ENCODE measurements at regions of chr14 and their contacts with region 1.

Region 1: DNA sequence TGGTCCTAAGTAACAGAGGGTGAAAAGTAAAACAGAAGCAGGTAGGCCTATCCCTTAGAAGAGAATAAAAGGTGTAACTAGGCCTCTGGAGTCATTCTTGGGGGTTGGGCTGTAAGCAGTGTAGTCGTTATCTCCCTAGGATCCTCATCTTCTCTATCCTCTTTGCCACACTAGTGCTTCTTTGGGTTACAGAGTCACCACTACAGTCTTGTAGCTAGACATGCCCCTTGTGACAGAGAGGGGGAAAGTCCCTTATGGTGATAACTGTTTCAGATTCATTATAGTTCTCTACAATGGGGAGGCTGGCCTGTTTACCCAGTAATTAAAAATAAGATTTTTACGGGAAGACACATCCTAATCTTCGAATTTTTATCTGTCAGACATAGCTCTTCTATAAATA is 16.4 kb upstream of the SRP54 start:
- DNase-seq: peak in 1 of 3 donors; percentile 5
- H3K4me3 ChIP-seq: no peak overlapping the region
- H3K27ac ChIP-seq: no peak overlapping the region
- H3K4me1 ChIP-seq: peaks cover 0 to 4% (median 0%) of the 10 kb centered on the region in 4 experiments
- H3K27me3 ChIP-seq: no peaks in the 10 kb centered on the region

Region 2: DNA sequence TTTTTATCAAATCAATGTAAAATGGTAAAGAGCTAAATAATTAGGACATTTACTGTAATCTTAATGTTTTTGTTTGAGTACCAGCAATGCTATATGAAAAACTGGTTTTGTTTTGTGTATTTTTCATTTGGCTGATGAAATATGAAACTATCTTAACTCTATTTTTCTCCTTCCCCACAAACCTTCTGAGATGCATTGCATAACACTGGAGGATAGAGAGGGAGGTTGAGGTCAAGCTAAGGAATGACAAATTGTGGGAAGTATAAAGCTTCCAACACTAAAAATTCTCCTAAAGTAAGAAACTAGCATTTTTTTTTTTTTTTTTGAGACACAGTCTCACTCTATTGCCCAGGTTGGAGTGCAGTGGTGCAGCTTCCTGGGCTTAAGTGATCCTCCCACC is 15.1 kb before region 1 on chr14:
- CTCF ChIA-PET with region 1: no interaction called
- POLR2A ChIA-PET with region 1: no interaction called
- DNase-seq: no peak
- H3K4me3 ChIP-seq: no peak overlapping the region
- H3K27ac ChIP-seq: no peak overlapping the region
- H3K4me1 ChIP-seq: no peaks in the 10 kb centered on the region
- H3K27me3 ChIP-seq: no peaks in the 10 kb centered on the region

Region 3: GRCh38 chr14:34981743-34982416 is 15.5 kb after region 1 on chr14:
- CTCF ChIA-PET with region 1: interaction called, 11 read pairs
- POLR2A ChIA-PET with region 1: no interaction called
- DNase-seq: peak; percentile 72 to 85 (median 79)
- H3K4me3 ChIP-seq: peak overlapping the region; percentile 74 to 98 (median 87)
- H3K27ac ChIP-seq: peak overlapping the region; percentile 90 to 94
- H3K4me1 ChIP-seq: peaks cover 13 to 41% (median 30%) of the 10 kb centered on the region in 4 experiments
- H3K27me3 ChIP-seq: no peaks in the 10 kb centered on the region

Region 4: GRCh38 chr14:35046048-35046741 is 79.8 kb after region 1 on chr14 and contains the start of gene FAM177A1:
- CTCF ChIA-PET with region 1: no interaction called
- POLR2A ChIA-PET with region 1: no interaction called
- DNase-seq: peak; percentile 98 to 100 (median 99)
- H3K4me3 ChIP-seq: peak within 1 kb of the TSS; percentile 71 to 95 (median 83)
- H3K27ac ChIP-seq: peak within 1 kb of the TSS; percentile 95 to 97
- H3K4me1 ChIP-seq: peaks cover 12 to 17% (median 15%) of the 10 kb centered on the region in 4 experiments
- H3K27me3 ChIP-seq: no peaks in the 10 kb centered on the region

Measured in common myeloid progenitor, CD34-positive (primary cell).